K562 (cell line): ENCODE measurements at regions of chr7 and their contacts with region 1.

Region 1: DNA sequence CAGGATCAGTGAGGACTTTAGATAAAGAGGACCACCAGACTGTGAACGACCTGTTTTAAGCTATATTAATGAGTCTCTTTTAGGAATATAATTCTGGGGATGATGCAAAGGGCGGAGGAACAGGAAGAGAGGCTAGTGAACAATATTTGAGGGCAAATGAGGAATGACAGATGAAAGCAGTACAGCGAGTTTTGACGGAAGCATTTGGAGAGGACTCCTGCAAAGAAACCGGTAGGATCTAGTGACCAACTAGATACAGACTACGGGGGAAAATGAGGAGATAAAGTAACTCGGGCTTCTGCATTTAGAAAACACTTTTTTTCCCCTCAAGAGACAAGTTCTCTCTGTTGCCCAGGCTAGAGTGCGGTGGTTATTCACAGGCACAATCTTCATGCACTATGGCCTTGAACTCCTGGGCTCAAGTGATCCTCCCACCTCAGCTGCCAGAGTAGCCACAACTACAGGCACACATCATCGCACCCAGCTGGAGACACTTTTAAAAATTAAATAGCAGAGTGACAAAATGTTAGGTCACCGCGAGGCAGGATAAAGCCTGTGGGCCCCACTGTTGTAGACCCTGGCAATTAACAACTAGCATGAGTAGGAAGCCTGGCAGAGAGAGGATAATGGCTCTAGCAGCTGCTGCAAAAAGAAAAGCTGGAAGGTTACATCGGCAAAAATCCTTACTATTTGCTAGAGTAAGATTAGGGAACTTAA is 143.2 kb downstream of the SRPK2 start:
- DNase-seq: no peak
- ATAC-seq: peak; percentile 52
- H3K4me3 ChIP-seq: no peak overlapping the region
- H3K27ac ChIP-seq: no peak overlapping the region
- H3K4me1 ChIP-seq: peaks cover 12 to 21% of the 10 kb centered on the region in 2 experiments; a peak in 4 of 5 replicates
- H3K27me3 ChIP-seq: no peaks in the 10 kb centered on the region
- CTCF ChIP-seq: no peak
- EP300 ChIP-seq: no peak
- POLR2A ChIP-seq: no peak
- RAD21 ChIP-seq: no peak

Region 2: GRCh38 chr7:105187302-105188169 is 58.0 kb before region 1 on chr7:
- CTCF ChIA-PET with region 1: no interaction called
- POLR2A ChIA-PET with region 1: no interaction called
- in situ Hi-C with region 1: no loop called
- intact Hi-C with region 1: loop called (anchors 10 kb)
- DNase-seq: no peak
- ATAC-seq: no peak
- H3K4me3 ChIP-seq: no peak overlapping the region
- H3K27ac ChIP-seq: no peak overlapping the region
- H3K4me1 ChIP-seq: no peaks in the 10 kb centered on the region
- H3K27me3 ChIP-seq: no peaks in the 10 kb centered on the region
- CTCF ChIP-seq: no peak
- EP300 ChIP-seq: no peak
- POLR2A ChIP-seq: no peak
- RAD21 ChIP-seq: no peak

Region 3: GRCh38 chr7:105268511-105269392 is 23.2 kb after region 1 on chr7:
- CTCF ChIA-PET with region 1: no interaction called
- POLR2A ChIA-PET with region 1: interaction called, 20 read pairs
- in situ Hi-C with region 1: no loop called
- intact Hi-C with region 1: no loop called
- DNase-seq: peak in 1 of 4 experiments; percentile 49
- ATAC-seq: peak; percentile 73
- H3K4me3 ChIP-seq: peak overlapping the region; percentile 0; the same call in 1 of the 2 replicates
- H3K27ac ChIP-seq: peak overlapping the region; percentile 22; the same call in 1 of the 3 replicates
- H3K4me1 ChIP-seq: peaks cover 3 to 14% of the 10 kb centered on the region in 2 experiments; a peak in 4 of 5 replicates
- H3K27me3 ChIP-seq: no peaks in the 10 kb centered on the region
- CTCF ChIP-seq: no peak
- EP300 ChIP-seq: no peak
- POLR2A ChIP-seq: no peak
- RAD21 ChIP-seq: no peak

Region 4: GRCh38 chr7:105426606-105427146 is 181.1 kb after region 1 on chr7:
- CTCF ChIA-PET with region 1: no interaction called
- POLR2A ChIA-PET with region 1: no interaction called
- in situ Hi-C with region 1: no loop called
- intact Hi-C with region 1: no loop called
- DNase-seq: no peak
- ATAC-seq: no peak
- H3K4me3 ChIP-seq: no peak overlapping the region
- H3K27ac ChIP-seq: no peak overlapping the region
- H3K4me1 ChIP-seq: peaks cover 0 to 5% of the 10 kb centered on the region in 2 experiments; a peak in 1 of 5 replicates
- H3K27me3 ChIP-seq: peaks cover 3 to 8% of the 10 kb centered on the region in 2 experiments; a peak in 4 of 5 replicates
- CTCF ChIP-seq: no peak
- EP300 ChIP-seq: no peak
- POLR2A ChIP-seq: no peak
- RAD21 ChIP-seq: no peak